Ovary (tissue), 10 donors: ENCODE measurements at regions of chr21 and their contacts with region 1.

Region 1: GRCh38 chr21:27564684-27565301 is 597.9 kb upstream of the ADAMTS5 start:
- DNase-seq: peak in 4 of 5 donors; percentile 18 to 57 (median 28)
- H3K4me3 ChIP-seq: no peak overlapping the region
- H3K27ac ChIP-seq: no peak overlapping the region
- H3K4me1 ChIP-seq: peaks cover 2% of the 10 kb centered on the region
- H3K27me3 ChIP-seq: no peaks in the 10 kb centered on the region
- CTCF ChIP-seq: peak in 2 of 3 donors; percentile 36 to 39
- EP300 ChIP-seq: no peak
- POLR2A ChIP-seq: no peak

Region 2: DNA sequence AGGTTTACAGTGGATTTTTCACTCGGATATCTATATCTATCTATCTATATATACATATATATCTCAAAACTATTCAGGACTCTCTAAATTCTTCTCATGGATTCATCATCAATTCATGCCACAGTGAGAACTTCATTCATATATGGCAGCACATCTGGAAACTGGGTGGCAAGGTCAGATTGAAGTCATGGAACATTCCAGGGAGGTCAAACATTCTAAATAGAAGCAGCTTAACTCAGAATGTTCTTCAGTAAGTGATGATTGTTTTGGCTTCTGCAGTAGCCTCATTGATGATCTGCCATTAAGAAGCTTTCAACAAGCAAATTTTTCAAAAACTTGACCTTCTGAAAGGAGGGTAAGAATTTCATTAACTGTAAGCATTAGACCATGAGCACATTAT is 672.6 kb before region 1 on chr21:
- intact Hi-C with region 1: loop called in 1 of 4 experiments (anchors 10 kb)
- DNase-seq: no peak
- H3K4me3 ChIP-seq: no peak overlapping the region
- H3K27ac ChIP-seq: no peak overlapping the region
- H3K4me1 ChIP-seq: peaks cover 2% of the 10 kb centered on the region
- H3K27me3 ChIP-seq: no peaks in the 10 kb centered on the region
- CTCF ChIP-seq: no peak
- EP300 ChIP-seq: no peak
- POLR2A ChIP-seq: no peak

Region 3: GRCh38 chr21:27448960-27449359 is 115.8 kb before region 1 on chr21:
- intact Hi-C with region 1: no loop called
- DNase-seq: peak in 1 of 5 donors; percentile 16
- H3K4me3 ChIP-seq: no peak overlapping the region
- H3K27ac ChIP-seq: no peak overlapping the region
- H3K4me1 ChIP-seq: no peaks in the 10 kb centered on the region
- H3K27me3 ChIP-seq: no peaks in the 10 kb centered on the region
- CTCF ChIP-seq: no peak
- EP300 ChIP-seq: no peak
- POLR2A ChIP-seq: no peak

Region 4: DNA sequence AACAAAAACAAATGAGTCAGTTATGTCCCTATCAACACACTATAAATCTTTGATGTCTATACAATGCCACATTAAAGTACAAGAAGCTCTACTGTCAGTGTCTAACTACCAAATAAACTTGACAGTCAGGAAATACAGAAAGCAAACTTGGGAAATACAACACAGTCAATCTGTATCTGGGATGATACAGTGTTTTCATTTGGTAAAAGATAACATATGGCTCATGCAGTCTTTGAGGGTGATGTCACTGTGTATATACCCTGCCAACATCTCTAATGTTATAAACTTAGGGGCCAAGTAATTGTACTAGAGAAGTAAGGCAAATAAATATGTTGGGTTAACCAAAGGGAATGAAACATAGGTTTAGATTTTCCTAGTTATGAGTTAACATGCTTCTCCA is 45.4 kb before region 1 on chr21:
- intact Hi-C with region 1: no loop called
- DNase-seq: no peak
- H3K4me3 ChIP-seq: no peak overlapping the region
- H3K27ac ChIP-seq: no peak overlapping the region
- H3K4me1 ChIP-seq: no peaks in the 10 kb centered on the region
- H3K27me3 ChIP-seq: no peaks in the 10 kb centered on the region
- CTCF ChIP-seq: no peak
- EP300 ChIP-seq: no peak
- POLR2A ChIP-seq: no peak